ENCODE measurements at regions of chr1 and their contacts with region 1.

Region 1: DNA sequence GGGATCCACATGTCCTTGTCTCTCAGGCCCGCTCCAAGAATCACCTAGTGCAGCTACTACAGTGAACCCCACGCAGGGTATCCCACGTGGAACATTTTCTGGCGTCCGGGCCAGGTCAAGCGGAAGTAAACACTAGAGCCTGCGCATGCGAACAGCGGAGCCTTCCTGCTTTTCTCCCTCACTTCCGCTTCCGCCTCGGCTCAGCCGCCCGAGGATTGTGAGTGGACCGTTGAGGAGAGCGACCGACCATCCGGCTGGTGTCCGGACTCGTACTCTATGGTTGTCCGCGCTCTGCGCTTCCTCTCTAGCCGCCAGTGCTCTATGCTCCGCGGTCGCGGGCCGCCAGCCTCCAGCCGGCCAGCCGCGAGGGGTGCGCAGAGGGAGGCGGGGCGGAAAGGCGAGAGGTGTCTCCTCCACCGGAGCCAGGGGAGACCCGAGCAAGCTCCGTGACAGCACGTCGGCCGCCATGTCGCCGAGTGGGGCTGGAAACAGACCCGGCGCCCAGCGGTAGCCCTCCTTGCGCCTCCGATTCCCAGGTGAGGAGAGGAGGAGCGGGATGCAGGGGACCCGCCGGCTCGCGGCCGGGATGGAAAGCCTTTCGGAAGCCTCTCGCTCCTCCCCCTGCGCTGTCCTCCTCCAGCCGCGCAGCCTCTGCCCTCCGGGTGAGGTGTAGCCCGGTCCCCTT is at the starts of genes CNST and TFB2M:
- DNase-seq: peak; percentile 98
- ATAC-seq: peak; percentile 98
- total RNA-seq, gene CNST: 17.0 to 18.3 TPM
- total RNA-seq, gene TFB2M: 10.7 to 12.9 TPM

Region 2: GRCh38 chr1:246602194-246602593 is 35.9 kb after region 1 on chr1:
- intact Hi-C with region 1: loop called in 1 of 2 experiments (anchors 5 kb)
- DNase-seq: no peak
- ATAC-seq: no peak

Region 3: GRCh38 chr1:246647113-246647512 is 80.8 kb after region 1 on chr1:
- intact Hi-C with region 1: loop called in 1 of 2 experiments (anchors 5 kb)
- DNase-seq: peak; percentile 63
- ATAC-seq: peak; percentile 93 to 95

Region 4: DNA sequence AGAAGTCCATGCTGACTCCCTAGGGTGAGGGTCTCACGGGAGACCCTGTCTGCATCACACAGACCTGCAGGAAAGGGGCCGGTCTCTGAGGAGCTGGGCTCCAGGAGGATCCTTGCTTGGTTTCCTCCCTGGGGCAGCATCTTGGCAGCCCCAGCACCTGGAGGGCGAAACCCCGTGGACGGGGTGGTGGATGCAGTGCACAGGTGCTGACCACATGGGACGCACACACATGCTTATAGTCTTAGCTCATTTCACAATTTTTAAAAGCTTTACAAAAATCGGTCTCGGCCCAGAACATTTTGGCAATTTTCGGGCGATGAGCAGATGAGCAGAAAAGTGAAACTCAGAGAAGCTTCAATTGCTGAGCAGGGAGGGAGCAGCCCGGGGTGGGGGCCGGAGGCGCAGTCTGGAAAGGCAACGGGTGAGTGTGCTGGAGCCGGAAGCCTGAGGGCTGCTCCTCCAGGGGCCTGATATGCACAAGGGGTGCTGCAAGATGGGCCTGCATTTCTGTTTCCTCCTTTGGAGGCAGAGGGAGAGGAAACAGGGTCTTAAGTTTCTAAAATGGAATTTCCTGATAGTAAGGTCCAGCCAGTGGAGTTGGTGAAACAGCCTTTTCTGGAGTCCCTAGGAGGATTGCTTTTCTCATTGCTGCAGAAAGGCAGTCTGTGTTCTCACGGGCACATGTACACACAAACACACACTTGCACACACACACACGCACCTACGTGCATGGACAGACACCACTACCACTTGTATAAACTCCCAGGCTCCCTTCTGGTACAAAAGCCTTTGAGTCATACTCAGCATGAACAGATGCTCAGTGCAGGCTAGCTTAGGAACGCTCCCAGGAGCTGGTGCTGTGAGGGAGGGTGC is 218.6 kb after region 1 on chr1:
- intact Hi-C with region 1: no loop called
- DNase-seq: peak; percentile 42
- ATAC-seq: peak in 1 of 2 donors; percentile 25

Measured in left cardiac atrium (tissue), 4 donors.